MCF 10A (cell line): ENCODE measurements at regions of chr3 and their contacts with region 1.

Region 1: DNA sequence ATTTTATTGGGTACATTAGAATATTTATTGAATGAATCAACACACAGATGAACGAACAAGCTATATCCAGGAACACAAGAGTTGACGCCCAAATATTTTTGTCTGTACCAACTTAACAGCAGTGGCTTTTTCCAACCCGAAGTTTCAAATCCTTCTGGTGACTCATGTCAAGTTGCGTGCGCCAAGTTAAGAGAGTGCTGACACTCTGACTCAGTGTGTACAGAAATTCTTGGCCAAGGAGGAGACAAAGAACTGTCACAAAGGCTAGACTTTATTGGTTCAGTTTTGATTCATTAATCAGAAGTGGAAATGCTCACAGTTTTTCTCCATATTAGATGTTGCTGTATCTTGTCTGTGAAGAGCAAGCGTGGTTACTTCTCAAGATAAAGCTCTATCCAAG is 59.6 kb upstream of the TSC22D2 start:
- DNase-seq: peak; percentile 93
- H3K4me3 Mint-ChIP-seq: peak overlapping the region; percentile 8
- H3K27ac Mint-ChIP-seq: peak overlapping the region; percentile 91
- H3K4me1 Mint-ChIP-seq: peaks cover 50% of the 10 kb centered on the region
- H3K27me3 Mint-ChIP-seq: no peaks in the 10 kb centered on the region
- CTCF ChIP-seq: no peak

Region 2: GRCh38 chr3:149738876-149739275 is 609.6 kb before region 1 on chr3:
- CTCF ChIA-PET with region 1: no interaction called
- POLR2A ChIA-PET with region 1: no interaction called
- intact Hi-C with region 1: no loop called
- DNase-seq: no peak
- H3K4me3 Mint-ChIP-seq: no peak overlapping the region
- H3K27ac Mint-ChIP-seq: no peak overlapping the region
- H3K4me1 Mint-ChIP-seq: peaks cover 16% of the 10 kb centered on the region
- H3K27me3 Mint-ChIP-seq: no peaks in the 10 kb centered on the region
- CTCF ChIP-seq: no peak

Region 3: GRCh38 chr3:150074697-150075416 is 273.6 kb before region 1 on chr3:
- CTCF ChIA-PET with region 1: no interaction called
- POLR2A ChIA-PET with region 1: no interaction called
- intact Hi-C with region 1: no loop called
- DNase-seq: no peak
- H3K4me3 Mint-ChIP-seq: no peak overlapping the region
- H3K27ac Mint-ChIP-seq: no peak overlapping the region
- H3K4me1 Mint-ChIP-seq: peaks cover 11% of the 10 kb centered on the region
- H3K27me3 Mint-ChIP-seq: peaks cover 12% of the 10 kb centered on the region
- CTCF ChIP-seq: no peak

Region 4: GRCh38 chr3:150319904-150320303 is 28.6 kb before region 1 on chr3:
- CTCF ChIA-PET with region 1: no interaction called
- POLR2A ChIA-PET with region 1: interaction called, 23 read pairs
- intact Hi-C with region 1: no loop called
- DNase-seq: peak; percentile 97
- H3K4me3 Mint-ChIP-seq: no peak overlapping the region
- H3K27ac Mint-ChIP-seq: no peak overlapping the region
- H3K4me1 Mint-ChIP-seq: peaks cover 22% of the 10 kb centered on the region
- H3K27me3 Mint-ChIP-seq: no peaks in the 10 kb centered on the region
- CTCF ChIP-seq: no peak

Region 5: DNA sequence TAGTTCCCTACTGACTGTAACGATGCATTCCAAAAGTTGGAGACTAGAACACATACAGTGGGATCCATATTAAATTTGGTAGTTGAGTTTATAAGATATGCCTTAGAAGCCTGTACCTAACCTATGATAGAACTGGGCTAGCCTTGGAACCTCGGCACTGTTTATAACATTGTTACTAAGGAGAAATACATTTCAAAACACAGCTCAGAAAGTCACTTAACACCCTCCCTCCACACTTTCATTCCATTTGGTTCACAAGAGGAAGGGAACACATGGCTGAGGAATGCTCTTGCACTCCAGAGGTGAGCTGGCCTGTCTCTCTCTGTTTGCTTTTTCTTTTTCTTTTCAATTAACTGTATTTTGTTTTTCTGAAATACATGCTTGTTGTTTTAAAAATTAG is 10.9 kb after region 1 on chr3:
- CTCF ChIA-PET with region 1: interaction called, 3 read pairs
- POLR2A ChIA-PET with region 1: interaction called, 23 read pairs
- intact Hi-C with region 1: no loop called
- DNase-seq: no peak
- H3K4me3 Mint-ChIP-seq: no peak overlapping the region
- H3K27ac Mint-ChIP-seq: no peak overlapping the region
- H3K4me1 Mint-ChIP-seq: no peaks in the 10 kb centered on the region
- H3K27me3 Mint-ChIP-seq: no peaks in the 10 kb centered on the region
- CTCF ChIP-seq: no peak

Region 6: GRCh38 chr3:150365132-150365604 is 16.7 kb after region 1 on chr3:
- CTCF ChIA-PET with region 1: interaction called, 6 read pairs
- POLR2A ChIA-PET with region 1: interaction called, 53 read pairs
- intact Hi-C with region 1: loop called (anchors 1 kb)
- DNase-seq: peak; percentile 69
- H3K4me3 Mint-ChIP-seq: no peak overlapping the region
- H3K27ac Mint-ChIP-seq: peak overlapping the region; percentile 47
- H3K4me1 Mint-ChIP-seq: peaks cover 21% of the 10 kb centered on the region
- H3K27me3 Mint-ChIP-seq: no peaks in the 10 kb centered on the region
- CTCF ChIP-seq: no peak